ENCODE measurements at regions of chr6 and their contacts with region 1.

Region 1: GRCh38 chr6:139016337-139017213 is 12.0 kb upstream of the ABRACL start:
- DNase-seq: no peak
- H3K4me3 ChIP-seq: no peak overlapping the region
- H3K27ac ChIP-seq: no peak overlapping the region
- H3K4me1 ChIP-seq: peaks cover 5% of the 10 kb centered on the region
- H3K27me3 ChIP-seq: no peaks in the 10 kb centered on the region
- CTCF ChIP-seq: no peak
- EP300 ChIP-seq: no peak
- POLR2A ChIP-seq: no peak

Region 2: DNA sequence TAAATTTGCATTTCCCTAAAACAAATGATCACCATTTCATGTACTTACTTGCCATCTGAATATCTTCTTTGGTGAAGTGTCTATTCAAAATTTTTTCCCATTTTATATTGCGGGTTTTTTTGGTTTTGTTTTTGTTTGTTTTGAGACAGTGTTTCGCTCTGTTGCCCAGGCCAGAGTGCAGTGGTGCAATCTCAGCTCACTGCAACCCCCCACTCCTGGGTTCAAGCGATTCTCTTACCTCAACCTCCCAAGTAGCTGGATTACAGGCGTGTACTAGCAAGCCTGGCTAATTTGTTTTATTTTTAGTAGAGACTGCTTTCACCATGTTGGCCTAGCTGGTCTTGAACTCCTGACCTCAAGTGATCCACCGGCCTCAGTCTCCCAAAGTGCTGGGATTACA is 19.4 kb before region 1 on chr6:
- intact Hi-C with region 1: loop called in 1 of 4 experiments (anchors 1 kb)
- DNase-seq: no peak
- H3K4me3 ChIP-seq: no peak overlapping the region
- H3K27ac ChIP-seq: no peak overlapping the region
- H3K4me1 ChIP-seq: no peaks in the 10 kb centered on the region
- H3K27me3 ChIP-seq: no peaks in the 10 kb centered on the region
- CTCF ChIP-seq: no peak
- EP300 ChIP-seq: no peak
- POLR2A ChIP-seq: no peak

Region 3: GRCh38 chr6:139153855-139154254 is 137.3 kb after region 1 on chr6:
- intact Hi-C with region 1: no loop called
- DNase-seq: no peak
- H3K4me3 ChIP-seq: no peak overlapping the region
- H3K27ac ChIP-seq: no peak overlapping the region
- H3K4me1 ChIP-seq: peaks cover 4% of the 10 kb centered on the region
- H3K27me3 ChIP-seq: no peaks in the 10 kb centered on the region
- CTCF ChIP-seq: no peak
- EP300 ChIP-seq: no peak
- POLR2A ChIP-seq: no peak

Measured in ovary (tissue), 10 donors.